ENCODE measurements at regions of chr2 and their contacts with region 1.

Region 1: GRCh38 chr2:180604077-180604476 is 376.3 kb upstream of the UBE2E3 start:
- DNase-seq: peak; percentile 13
- H3K4me3 ChIP-seq: no peak overlapping the region
- H3K27ac ChIP-seq: no peak overlapping the region
- H3K4me1 ChIP-seq: no peaks in the 10 kb centered on the region
- H3K27me3 ChIP-seq: no peaks in the 10 kb centered on the region
- CTCF ChIP-seq: peak in 2 of 5 experiments; percentile 23 to 34
- EP300 ChIP-seq: no peak
- POLR2A ChIP-seq: no peak

Region 2: GRCh38 chr2:181036848-181037603 is 432.9 kb after region 1 on chr2:
- in situ Hi-C with region 1: loop called in 1 of 4 experiments (anchors 25 kb)
- intact Hi-C with region 1: no loop called
- DNase-seq: no peak
- H3K4me3 ChIP-seq: no peak overlapping the region
- H3K27ac ChIP-seq: no peak overlapping the region
- H3K4me1 ChIP-seq: no peaks in the 10 kb centered on the region
- H3K27me3 ChIP-seq: no peaks in the 10 kb centered on the region
- CTCF ChIP-seq: no peak
- EP300 ChIP-seq: no peak
- POLR2A ChIP-seq: no peak